Activated T-helper 1 cell treated with anti-CD3 and anti-CD28 coated beads, Interleukin-12 subunit alpha, Interleukin-12 subunit beta, Interleukin-2, Interleukin-4 antibody, amounts not matched to agents 30 ng/mL and 10 ng/mL and 1 ng/mL, durations not matched to agents 14 hours and 24 hours and 36 hours (primary cell): ENCODE measurements at regions of chr6 and their contacts with region 1.

Region 1: DNA sequence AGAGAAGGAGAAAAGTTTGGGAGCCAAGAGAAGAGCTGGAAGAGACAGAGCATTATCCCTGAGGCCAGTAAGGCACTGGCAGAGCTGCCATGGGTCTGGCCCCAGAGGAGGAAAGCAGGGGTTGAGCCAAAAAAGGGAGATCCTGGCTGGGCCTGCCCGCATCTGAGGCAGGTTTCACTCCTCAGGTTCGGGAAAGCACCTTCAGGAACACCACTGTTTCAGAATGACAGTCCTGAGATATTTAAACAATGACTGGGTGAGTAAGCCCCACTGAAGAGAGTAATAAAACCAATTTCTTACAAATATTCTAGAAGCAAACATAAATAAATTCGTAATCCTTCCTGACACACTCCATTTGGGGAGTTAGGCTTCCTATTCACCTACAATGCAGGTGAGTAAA is 152.2 kb downstream of the BACH2 start:
- DNase-seq: no peak
- H3K4me3 Mint-ChIP-seq: peak overlapping the region; percentile 45
- H3K27ac Mint-ChIP-seq: peak overlapping the region; percentile 78
- H3K4me1 Mint-ChIP-seq: peaks cover 66% of the 10 kb centered on the region
- H3K27me3 Mint-ChIP-seq: peaks cover 15% of the 10 kb centered on the region

Region 2: DNA sequence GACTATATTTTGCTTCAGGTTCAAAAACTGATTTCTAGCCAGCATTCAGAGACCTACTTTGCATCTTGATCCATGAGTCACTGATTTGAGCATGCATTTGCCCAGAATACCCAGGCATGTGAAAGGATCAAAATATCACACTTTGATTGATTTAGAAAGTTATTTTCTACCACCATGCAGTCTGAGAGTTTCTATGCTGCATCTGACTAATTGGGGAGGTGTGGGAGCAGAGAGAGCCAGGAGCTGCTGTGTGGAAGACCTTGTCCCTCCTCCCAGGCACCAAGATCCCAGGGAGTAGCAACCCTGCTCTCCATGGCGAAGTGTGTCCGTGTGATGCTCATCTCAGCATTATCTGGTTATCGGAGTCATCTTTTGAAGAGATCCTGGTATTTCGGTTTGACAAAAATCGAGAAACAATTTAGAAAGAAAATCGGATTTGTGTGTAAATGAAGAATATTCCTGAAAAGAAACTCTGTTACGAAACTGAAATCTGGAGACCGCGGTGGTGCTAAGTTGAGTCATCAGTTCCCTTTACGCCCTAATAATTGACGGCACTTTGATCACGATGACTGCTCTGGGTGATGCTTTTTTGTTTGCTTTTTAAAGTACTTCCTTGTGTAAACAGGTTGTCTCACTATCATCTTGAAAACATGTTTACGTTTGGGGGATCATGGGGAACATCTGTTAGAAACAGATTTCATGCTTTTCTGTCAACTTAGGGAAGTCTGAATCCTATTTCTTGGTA is 41.2 kb before region 1 on chr6:
- intact Hi-C with region 1: loop called (anchors 1 kb)
- DNase-seq: no peak
- H3K4me3 Mint-ChIP-seq: peak overlapping the region; percentile 79
- H3K27ac Mint-ChIP-seq: peak overlapping the region; percentile 88
- H3K4me1 Mint-ChIP-seq: peaks cover 70% of the 10 kb centered on the region
- H3K27me3 Mint-ChIP-seq: no peaks in the 10 kb centered on the region

Region 3: GRCh38 chr6:90121982-90122381 is 22.4 kb before region 1 on chr6:
- intact Hi-C with region 1: loop called (anchors 1 kb)
- DNase-seq: no peak
- H3K4me3 Mint-ChIP-seq: peak overlapping the region; percentile 24
- H3K27ac Mint-ChIP-seq: peak overlapping the region; percentile 84
- H3K4me1 Mint-ChIP-seq: peaks cover 61% of the 10 kb centered on the region
- H3K27me3 Mint-ChIP-seq: peaks cover 2% of the 10 kb centered on the region

Region 4: DNA sequence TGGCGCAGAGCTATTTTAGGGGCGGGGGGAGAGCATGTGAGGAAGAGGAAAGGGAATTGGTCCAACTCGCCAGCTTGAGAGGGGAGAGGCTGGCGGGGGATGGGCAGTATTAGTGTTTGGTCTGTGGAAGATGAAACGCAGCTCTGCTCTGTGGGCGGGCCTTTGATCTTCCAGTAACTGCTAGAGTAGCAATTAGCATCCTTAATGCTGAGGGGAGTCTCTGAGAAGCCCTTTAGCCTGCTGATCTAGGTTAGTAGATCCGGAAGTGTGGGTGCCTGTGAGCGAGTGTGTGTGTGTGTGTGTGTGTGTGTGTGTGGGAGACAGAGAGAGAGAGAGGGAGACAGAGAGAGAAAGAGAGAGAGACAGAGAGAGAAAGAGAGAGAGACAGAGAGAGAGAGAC is 269.5 kb after region 1 on chr6:
- intact Hi-C with region 1: no loop called
- DNase-seq: peak; percentile 61
- H3K4me3 Mint-ChIP-seq: peak overlapping the region; percentile 63
- H3K27ac Mint-ChIP-seq: peak overlapping the region; percentile 95
- H3K4me1 Mint-ChIP-seq: peaks cover 81% of the 10 kb centered on the region
- H3K27me3 Mint-ChIP-seq: no peaks in the 10 kb centered on the region

Region 5: DNA sequence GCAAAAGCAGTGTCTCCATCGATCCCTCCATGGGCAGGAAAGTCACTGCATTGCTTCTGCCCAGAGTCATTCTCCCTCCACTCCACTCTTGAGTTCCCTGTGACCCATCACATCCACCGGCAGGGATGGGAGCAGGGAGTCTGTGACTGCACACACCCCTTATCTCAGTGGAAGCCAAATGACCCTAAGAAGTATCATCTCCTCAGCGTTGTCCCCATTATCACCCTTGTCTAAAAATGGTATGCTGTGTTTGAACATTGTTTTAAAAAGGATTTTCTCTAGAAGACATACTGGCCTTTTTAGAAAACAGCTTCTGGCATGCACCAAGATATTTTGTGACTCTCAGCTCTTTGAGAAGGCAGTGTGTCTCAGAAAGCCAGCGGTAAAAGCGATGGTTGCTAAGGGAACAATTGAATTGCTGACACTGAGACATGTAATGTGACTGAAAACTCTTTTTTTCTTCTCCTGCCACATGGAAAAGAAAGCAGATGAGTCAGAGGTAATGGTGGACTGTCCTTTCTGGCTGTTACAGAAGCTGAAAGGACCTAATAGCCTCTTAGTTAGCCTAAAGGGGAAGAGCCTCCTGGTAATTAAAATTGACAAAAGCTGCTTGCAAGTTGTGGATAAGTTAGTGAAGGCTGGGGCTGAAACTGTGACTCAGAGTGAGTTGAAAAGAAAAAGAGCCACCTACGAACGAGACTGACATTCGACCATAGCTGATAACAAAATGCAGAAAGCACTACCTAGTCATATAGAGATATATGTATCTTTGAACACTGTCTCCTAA is 322.0 kb after region 1 on chr6:
- intact Hi-C with region 1: loop called (anchors 2 kb)
- DNase-seq: no peak
- H3K4me3 Mint-ChIP-seq: peak overlapping the region; percentile 61
- H3K27ac Mint-ChIP-seq: peak overlapping the region; percentile 92
- H3K4me1 Mint-ChIP-seq: peaks cover 93% of the 10 kb centered on the region
- H3K27me3 Mint-ChIP-seq: no peaks in the 10 kb centered on the region